PC-3 (cell line): ENCODE measurements at regions of chr1 and their contacts with region 1.

Region 1: GRCh38 chr1:208238710-208239472 is 5.3 kb downstream of the PLXNA2 start:
- DNase-seq: peak; percentile 71
- ATAC-seq: peak; percentile 30
- H3K4me3 ChIP-seq: no peak overlapping the region
- H3K27ac ChIP-seq: no peak overlapping the region
- H3K4me1 ChIP-seq: peaks cover 21% of the 10 kb centered on the region
- H3K27me3 ChIP-seq: no peaks in the 10 kb centered on the region
- CTCF ChIP-seq: peak; percentile 82

Region 2: GRCh38 chr1:208081972-208082371 is 156.9 kb before region 1 on chr1:
- CTCF ChIA-PET with region 1: no interaction called
- POLR2A ChIA-PET with region 1: no interaction called
- intact Hi-C with region 1: no loop called
- DNase-seq: no peak
- ATAC-seq: no peak
- H3K4me3 ChIP-seq: no peak overlapping the region
- H3K27ac ChIP-seq: no peak overlapping the region
- H3K4me1 ChIP-seq: no peaks in the 10 kb centered on the region
- H3K27me3 ChIP-seq: no peaks in the 10 kb centered on the region
- CTCF ChIP-seq: no peak

Region 3: DNA sequence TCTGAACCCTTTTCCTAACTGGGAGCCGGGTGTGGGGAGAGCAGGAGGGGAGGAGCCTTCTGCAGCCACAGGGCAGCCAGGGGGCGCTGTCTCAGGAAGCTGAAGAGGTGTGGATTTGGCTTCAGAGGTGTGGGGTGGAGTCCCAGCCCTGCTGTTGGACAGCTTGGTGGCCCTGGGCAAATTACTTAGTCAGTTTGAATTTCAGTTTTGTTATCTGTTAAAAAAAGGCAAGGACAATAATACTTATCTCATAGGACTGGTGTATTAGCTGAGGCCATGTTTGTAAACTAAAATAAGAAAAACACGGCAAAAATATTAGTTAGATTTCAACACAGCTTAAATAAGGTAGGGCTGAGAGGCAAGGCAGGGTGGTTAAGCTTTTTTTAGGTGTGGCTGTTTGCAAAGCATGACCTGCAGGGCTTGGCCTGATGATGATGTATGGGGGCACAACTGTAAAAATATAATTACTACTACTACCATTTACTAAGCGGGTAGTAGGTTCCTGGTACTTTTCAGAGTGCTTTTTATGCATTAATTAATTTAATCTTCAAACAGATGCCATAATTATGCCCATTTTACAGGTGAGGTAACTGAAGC is 106.5 kb before region 1 on chr1:
- CTCF ChIA-PET with region 1: interaction called, 24 read pairs
- POLR2A ChIA-PET with region 1: no interaction called
- intact Hi-C with region 1: loop called (anchors 1 kb)
- DNase-seq: peak; percentile 93
- ATAC-seq: peak; percentile 100
- H3K4me3 ChIP-seq: peak overlapping the region; percentile 2; the same call in 1 of the 2 replicates
- H3K27ac ChIP-seq: peak overlapping the region; percentile 46
- H3K4me1 ChIP-seq: peaks cover 16% of the 10 kb centered on the region
- H3K27me3 ChIP-seq: no peaks in the 10 kb centered on the region
- CTCF ChIP-seq: peak; percentile 99

Region 4: DNA sequence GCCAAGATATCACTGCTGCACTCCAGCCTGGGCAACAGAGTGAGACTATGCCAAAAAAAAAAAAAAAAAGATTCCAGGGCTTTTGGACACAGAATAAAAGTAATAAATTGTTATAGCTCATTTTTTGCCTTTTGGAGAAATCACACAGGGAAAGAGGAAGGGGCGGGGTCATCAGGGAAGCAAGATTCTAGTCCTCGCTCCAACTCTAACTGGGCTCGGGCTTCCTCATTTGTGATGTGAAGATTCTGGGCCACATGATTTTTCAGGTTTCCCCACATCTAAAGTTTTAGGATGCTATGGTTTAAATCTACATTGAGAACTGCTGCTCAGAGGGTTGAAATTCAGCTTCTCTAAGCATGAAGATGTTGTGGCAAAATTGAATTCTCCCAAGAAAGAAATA is 184.6 kb after region 1 on chr1:
- CTCF ChIA-PET with region 1: no interaction called
- POLR2A ChIA-PET with region 1: interaction called, 23 read pairs
- intact Hi-C with region 1: no loop called
- DNase-seq: no peak
- ATAC-seq: no peak
- H3K4me3 ChIP-seq: no peak overlapping the region
- H3K27ac ChIP-seq: no peak overlapping the region
- H3K4me1 ChIP-seq: no peaks in the 10 kb centered on the region
- H3K27me3 ChIP-seq: peaks cover 3% of the 10 kb centered on the region; the same call in 1 of the 2 replicates
- CTCF ChIP-seq: no peak